ENCODE measurements at regions of chr12 and their contacts with region 1.

Region 1: DNA sequence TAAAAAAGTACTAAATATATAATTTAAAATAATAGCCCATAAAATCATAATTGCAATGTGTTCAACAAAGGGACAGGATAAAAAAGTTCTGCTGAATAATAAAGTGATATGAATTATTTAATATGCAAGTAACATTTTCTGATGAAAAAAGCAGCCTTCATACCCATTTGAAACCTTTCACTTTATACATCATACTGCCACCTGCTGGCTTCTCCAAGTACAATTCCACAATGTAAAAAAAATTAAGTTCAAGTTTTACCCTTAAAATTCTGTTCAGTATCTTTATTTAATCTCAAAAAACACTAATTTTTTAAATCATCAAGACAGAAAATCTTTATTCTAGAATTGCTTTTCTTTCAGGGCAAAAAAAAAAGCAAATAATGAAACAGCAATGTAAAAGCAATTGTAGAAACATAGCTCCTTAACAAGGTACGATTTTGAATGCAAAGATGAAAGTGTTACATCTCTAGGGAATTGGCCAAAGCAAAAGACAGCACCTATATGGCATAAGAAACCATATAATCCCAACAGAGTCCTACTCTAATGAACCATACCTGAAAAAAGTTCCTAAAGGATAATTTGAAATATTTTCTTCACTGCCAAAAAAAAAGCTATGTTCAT is 15.0 kb downstream of the MDM1 start:
- DNase-seq: no peak
- ATAC-seq: no peak
- H3K4me3 ChIP-seq: no peak overlapping the region
- H3K27ac ChIP-seq: no peak overlapping the region
- H3K4me1 ChIP-seq: no peaks in the 10 kb centered on the region
- H3K27me3 ChIP-seq: no peaks in the 10 kb centered on the region

Region 2: DNA sequence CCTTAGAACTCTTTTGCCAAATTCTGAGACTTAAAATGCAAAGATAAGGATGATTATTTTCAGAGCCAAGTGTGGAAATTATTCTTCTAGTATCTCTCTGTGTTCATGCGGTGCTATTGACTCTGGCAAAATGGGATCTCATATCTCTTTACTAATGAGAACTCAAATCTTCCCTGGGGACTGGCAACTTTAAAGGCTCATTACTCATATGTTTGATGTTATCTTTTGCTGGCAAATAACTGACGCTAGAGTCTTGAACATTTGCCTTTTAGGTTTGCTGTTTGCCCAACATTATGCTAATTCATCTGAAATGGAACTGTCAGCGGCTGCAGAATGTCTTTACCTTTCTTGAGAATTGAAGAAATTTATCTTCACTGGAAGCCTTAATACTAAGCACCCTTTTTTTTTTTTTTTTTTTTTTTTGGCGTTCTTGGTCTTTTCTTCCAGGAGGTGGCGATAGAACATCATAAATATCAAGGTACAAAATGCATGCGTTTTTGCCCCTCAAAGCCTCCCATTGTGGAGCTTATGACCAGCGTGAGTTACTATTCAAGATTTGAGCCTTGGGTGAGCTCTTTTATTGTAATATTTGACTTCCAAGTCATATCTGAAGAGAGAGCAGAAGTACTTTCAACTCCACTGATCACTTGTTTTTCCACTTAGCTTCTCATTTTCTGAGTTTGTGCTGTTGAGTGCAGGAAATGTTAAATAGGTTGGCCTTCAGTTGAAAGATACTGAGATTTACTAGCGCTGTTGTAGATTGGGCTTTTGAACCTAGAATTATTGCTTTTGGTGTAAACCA is 961.4 kb before region 1 on chr12:
- intact Hi-C with region 1: loop called (anchors 5 to 10 kb)
- DNase-seq: no peak
- ATAC-seq: peak; percentile 80
- H3K4me3 ChIP-seq: no peak overlapping the region
- H3K27ac ChIP-seq: no peak overlapping the region
- H3K4me1 ChIP-seq: peaks cover 0 to 3% of the 10 kb centered on the region in 2 donors
- H3K27me3 ChIP-seq: no peaks in the 10 kb centered on the region

Region 3: GRCh38 chr12:68040450-68041075 is 276.6 kb before region 1 on chr12:
- intact Hi-C with region 1: loop called in 1 of 2 experiments (anchors 2 kb)
- DNase-seq: peak; percentile 61 to 69
- ATAC-seq: peak; percentile 71
- H3K4me3 ChIP-seq: no peak overlapping the region
- H3K27ac ChIP-seq: no peak overlapping the region
- H3K4me1 ChIP-seq: no peaks in the 10 kb centered on the region
- H3K27me3 ChIP-seq: no peaks in the 10 kb centered on the region

Region 4: DNA sequence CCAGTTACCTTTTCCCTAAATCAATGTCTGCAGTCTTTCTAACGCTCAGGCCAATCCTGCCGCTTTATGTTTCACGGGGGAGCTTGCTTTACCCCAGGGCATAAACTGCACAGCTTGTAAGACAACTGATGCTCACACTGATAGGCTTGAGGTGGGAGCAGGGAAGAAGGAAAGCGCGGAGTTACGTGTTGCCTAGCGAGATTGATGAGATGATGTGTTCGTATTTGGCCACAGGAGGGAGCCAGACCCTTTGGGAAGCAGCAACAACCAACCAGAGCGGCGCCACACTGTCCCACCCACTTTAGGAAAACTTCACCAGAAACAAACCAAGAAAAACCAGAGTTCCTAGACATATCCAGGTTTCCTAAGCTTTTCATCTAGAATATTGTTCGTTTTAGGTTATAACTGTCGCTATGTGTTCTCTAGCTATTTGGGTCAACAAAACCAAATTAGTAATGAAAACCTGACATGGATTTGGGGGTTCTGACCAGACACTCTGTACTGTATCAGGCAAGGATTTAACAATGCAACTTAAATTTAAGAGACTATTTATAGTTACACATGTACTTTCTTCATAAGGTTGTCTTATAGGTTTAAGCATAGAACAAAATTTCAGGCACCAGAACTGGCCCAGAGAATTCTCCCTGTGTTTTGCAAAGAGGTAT is 93.9 kb before region 1 on chr12:
- intact Hi-C with region 1: loop called (anchors 1 to 2 kb)
- DNase-seq: peak; percentile 83 to 87
- ATAC-seq: peak; percentile 96
- H3K4me3 ChIP-seq: no peak overlapping the region
- H3K27ac ChIP-seq: no peak overlapping the region
- H3K4me1 ChIP-seq: no peaks in the 10 kb centered on the region
- H3K27me3 ChIP-seq: no peaks in the 10 kb centered on the region

Measured in aorta (tissue), 5 donors.